ENCODE measurements at regions of chr1 and their contacts with region 1.

Region 1: GRCh38 chr1:42766741-42767509 is at the starts of genes C1orf50 and P3H1:
- DNase-seq: peak; percentile 100
- ATAC-seq: peak; percentile 97 to 98 (median 98)
- H3K4me3 ChIP-seq: peak within 1 kb of the TSS; percentile 85
- H3K27ac ChIP-seq: peak within 1 kb of the TSS; percentile 91
- H3K4me1 ChIP-seq: peaks cover 39% of the 10 kb centered on the region
- H3K27me3 ChIP-seq: no peaks in the 10 kb centered on the region
- CTCF ChIP-seq: no peak
- total RNA-seq, gene C1orf50: 7.5 to 10.2 (median 8.7) TPM
- total RNA-seq, gene P3H1: 5.1 to 8.5 (median 6.2) TPM

Region 2: DNA sequence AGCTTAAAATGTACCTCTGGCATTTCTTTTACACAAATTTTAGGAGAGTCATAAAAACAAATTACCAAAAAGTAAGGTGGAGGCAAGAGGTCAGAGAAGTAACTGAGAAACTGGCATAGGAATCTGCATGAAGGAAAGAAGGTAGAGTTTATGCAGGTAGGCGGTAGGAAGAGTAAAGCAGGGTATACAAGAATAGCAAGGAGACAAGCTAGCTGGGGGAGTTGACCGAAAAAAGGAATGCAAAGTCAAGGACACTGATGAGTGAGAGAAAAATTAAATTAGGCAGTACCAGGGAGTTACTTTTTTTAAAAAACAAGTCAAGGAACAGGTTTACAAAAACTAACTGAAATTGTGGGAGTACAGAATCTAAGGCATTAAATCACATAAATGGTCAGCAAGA is 487.9 kb before region 1 on chr1:
- intact Hi-C with region 1: no loop called
- DNase-seq: no peak
- ATAC-seq: no peak
- H3K4me3 ChIP-seq: peak overlapping the region; percentile 9
- H3K27ac ChIP-seq: no peak overlapping the region
- H3K4me1 ChIP-seq: peaks cover 41% of the 10 kb centered on the region
- H3K27me3 ChIP-seq: no peaks in the 10 kb centered on the region
- CTCF ChIP-seq: no peak

Region 3: DNA sequence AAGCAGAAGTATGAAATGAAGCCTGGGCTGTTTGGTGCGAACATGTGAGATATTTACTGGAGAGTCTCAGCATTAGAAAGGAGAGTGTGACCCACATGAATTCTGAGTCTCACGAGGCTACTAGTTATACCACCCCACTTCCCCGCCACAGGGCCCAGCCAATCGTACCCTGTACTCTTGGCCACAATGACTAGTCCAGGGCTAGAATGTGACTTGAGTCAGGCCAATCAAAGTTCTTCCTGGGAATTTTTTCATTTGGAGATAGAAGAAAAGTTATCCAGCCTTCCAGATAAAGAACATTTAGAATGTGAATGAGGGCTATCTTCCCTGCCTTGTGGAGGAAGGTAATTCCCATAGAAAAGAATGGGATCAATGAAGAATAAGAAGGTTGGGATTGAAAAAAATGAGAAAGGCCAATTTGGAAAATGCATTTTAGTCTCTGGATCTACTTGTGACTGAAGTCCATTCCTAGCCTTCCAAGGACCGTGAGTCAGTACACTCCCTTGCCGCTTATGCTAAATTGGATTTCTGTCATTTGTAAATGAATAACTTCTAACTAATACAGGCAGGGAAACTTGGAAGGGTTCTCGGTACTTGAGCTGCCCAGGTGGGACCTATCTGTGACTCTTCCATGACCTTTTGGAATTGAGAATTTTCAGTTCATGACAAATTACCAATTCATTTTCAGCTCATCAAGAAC is 398.7 kb before region 1 on chr1:
- intact Hi-C with region 1: no loop called
- DNase-seq: no peak
- ATAC-seq: no peak
- H3K4me3 ChIP-seq: no peak overlapping the region
- H3K27ac ChIP-seq: no peak overlapping the region
- H3K4me1 ChIP-seq: no peaks in the 10 kb centered on the region
- H3K27me3 ChIP-seq: peaks cover 0 to 6% (median 2%) of the 10 kb centered on the region in 3 donors
- CTCF ChIP-seq: no peak

Region 4: DNA sequence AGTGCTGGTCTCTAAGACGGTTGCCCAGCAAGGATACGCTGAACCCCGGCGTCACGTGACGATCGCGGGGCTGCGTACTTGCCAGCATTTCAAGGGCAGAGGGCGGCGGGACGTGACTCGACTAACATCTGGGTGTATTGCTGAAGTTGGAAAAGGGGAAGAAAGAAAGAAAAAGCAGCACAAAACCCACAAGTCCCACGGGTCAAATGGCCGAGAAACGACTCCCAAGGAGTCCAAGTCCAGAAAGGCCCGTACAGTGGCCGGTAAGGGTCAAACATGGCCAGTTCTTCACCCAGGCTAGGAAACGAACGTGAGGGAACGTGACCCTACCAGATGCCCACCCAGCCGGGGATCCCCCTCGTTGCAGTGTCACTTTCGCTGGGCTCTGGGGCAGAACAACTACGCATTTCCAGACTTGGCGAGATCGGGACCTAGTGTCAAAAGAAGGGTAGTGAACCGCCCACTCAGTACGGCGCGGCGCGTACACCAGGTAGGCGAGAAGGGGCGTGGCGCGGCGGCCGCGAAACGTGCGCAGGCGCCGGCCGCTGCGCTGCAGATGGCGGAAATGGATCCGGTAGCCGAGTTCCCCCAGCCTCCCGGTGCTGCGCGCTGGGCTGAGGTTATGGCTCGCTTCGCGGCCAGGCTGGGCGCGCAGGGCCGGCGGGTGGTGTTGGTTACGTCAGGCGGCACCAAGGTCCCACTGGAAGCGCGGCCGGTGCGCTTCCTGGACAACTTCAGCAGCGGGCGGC is 310.7 kb before region 1 on chr1 and contains the starts of genes PPCS and ZMYND12:
- intact Hi-C with region 1: loop called in 1 of 2 experiments (anchors 10 kb)
- DNase-seq: peak; percentile 89 to 92
- ATAC-seq: peak; percentile 94 to 97 (median 96)
- H3K4me3 ChIP-seq: peak within 1 kb of the TSS; percentile 87
- H3K27ac ChIP-seq: peak within 1 kb of the TSS; percentile 90
- H3K4me1 ChIP-seq: peaks cover 6% of the 10 kb centered on the region
- H3K27me3 ChIP-seq: no peaks in the 10 kb centered on the region
- CTCF ChIP-seq: no peak
- total RNA-seq, gene PPCS: 26.1 to 41.0 (median 34.9) TPM
- total RNA-seq, gene ZMYND12: 0.76 to 2.7 (median 1.0) TPM

Region 5: DNA sequence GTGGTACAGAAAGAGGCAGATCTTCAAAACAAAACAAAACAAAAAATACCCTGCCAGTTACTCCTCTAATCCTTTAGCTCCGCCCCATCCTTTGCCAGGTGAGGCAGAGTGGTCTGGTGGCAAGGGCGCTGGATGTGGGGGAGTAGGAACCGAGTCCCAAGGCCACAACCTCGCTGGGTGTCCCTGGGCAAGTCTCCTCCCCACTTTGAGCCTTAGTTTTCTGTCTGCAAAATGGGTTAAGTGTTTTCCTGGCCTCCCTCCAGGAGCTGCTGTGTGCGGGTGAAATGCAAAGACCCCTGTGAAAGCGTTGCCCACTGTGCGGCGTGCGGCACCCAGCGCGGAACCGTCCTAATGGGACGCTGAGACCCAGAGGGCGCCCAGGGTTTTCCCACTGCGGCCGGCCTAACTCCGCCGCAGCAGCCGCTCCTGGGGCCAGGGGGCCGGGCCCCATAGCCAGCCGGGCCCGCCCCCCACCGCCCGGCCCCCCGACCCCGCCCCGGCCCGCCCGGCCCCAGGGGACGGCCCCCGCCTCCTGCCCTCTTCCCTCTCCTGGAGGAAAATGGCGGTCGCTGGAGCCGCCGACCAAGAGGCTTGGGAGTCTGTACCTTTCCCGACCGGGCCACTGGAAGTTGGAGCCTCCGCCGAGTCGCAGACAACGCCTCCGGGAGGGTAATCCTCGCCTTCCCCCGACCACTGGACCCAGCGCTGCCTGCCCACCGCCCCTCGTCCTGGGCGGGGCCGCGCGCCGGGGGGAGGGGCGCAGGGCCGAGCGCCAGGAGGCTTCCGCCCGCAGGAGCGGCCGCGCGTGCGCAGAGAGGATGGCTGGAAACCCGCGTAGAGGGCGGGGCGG is 49.9 kb after region 1 on chr1 and contains the starts of genes ERMAP and SVBP:
- intact Hi-C with region 1: loop called (anchors 2 to 5 kb)
- DNase-seq: peak; percentile 93 to 96
- ATAC-seq: peak; percentile 98 to 99 (median 98)
- H3K4me3 ChIP-seq: peak within 1 kb of the TSS; percentile 78
- H3K27ac ChIP-seq: peak within 1 kb of the TSS; percentile 97
- H3K4me1 ChIP-seq: peaks cover 19% of the 10 kb centered on the region
- H3K27me3 ChIP-seq: no peaks in the 10 kb centered on the region
- CTCF ChIP-seq: peak; percentile 3
- total RNA-seq, gene ERMAP: 1.8 to 3.7 (median 2.6) TPM
- total RNA-seq, gene SVBP: 11.7 to 18.4 (median 16.9) TPM

Region 6: DNA sequence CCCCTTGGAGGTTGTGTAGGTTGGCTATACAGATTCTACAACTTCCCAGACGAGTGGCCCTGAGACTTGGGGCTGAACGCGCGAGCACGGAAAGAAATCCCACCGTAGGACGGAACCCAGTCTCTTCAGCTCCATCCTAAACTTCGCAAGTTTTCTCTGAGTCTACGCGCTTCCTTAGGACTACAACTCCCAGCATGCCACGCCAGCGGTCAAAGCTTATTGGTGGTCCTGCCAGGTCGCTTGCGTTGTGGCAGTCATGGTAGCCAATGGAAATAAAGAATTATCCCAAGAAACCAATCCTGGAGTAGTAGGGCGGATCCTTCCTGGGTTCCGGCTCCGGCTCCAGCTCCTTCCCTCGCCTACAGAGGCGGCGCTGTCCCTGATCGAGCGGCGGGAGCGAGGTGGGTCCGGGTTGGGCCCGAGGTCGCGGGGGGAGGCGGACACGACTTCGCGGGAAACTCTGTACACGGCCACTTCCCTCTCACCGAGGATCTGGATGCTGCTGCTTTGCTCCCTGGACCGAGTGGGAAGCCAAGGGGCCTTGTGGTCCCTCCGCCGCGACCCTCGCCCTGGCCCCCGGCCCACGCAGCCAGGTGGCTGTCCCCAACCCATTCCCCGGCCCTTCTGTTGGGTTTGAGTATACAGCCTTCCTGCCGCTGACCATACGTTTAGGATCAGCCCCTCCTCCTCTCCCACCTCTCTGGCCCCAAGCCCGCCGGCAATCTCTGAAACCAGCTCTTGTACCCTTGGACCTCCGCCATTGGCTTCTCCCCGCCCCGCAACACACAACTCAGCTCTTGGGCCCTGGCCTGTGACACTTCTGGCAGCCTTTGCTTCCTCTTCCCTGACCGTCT is 79.6 kb after region 1 on chr1 and contains the start of gene ZNF691:
- intact Hi-C with region 1: loop called in 1 of 2 experiments (anchors 10 kb)
- DNase-seq: peak; percentile 92 to 96
- ATAC-seq: peak; percentile 98 to 100 (median 100)
- H3K4me3 ChIP-seq: peak within 1 kb of the TSS; percentile 73
- H3K27ac ChIP-seq: peak within 1 kb of the TSS; percentile 76
- H3K4me1 ChIP-seq: peaks cover 18% of the 10 kb centered on the region
- H3K27me3 ChIP-seq: no peaks in the 10 kb centered on the region
- CTCF ChIP-seq: peak; percentile 49
- total RNA-seq, gene ZNF691: 4.8 to 8.0 (median 6.4) TPM

Measured in psoas muscle (tissue), 8 donors.